MCF 10A (cell line): ENCODE measurements at regions of chr7 and their contacts with region 1.

Region 1: DNA sequence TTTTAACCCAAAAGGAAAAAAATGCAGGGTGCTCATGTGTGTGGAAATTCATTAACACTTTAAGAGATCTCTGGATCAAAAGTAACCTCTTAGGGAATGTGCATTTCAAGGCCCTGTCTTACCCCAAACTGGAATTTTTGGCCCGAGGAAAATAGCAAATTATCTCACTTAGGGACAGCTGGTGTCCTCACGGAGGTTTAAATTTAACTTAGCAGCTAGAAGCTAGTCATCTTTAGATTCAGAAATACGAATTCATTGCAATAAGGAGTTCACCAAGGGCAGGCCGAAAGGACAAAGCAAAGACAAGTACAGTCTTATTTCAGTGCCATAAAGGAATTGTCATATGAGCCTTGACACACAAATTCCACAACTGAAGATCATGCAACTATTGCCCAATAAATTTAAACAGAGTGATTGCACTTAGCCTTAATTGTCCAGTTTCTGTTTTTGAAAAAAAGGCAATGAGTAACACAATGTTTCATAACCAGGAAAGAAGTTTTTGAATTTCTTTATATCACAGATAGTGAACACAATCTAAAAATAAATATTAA is 22.4 kb upstream of the SEMA3C start:
- DNase-seq: peak; percentile 89
- H3K4me3 Mint-ChIP-seq: peak overlapping the region; percentile 26
- H3K27ac Mint-ChIP-seq: peak overlapping the region; percentile 76
- H3K4me1 Mint-ChIP-seq: peaks cover 20% of the 10 kb centered on the region
- H3K27me3 Mint-ChIP-seq: no peaks in the 10 kb centered on the region
- CTCF ChIP-seq: no peak

Region 2: GRCh38 chr7:80833289-80834268 is 107.7 kb before region 1 on chr7:
- CTCF ChIA-PET with region 1: no interaction called
- POLR2A ChIA-PET with region 1: no interaction called
- intact Hi-C with region 1: no loop called
- DNase-seq: no peak
- H3K4me3 Mint-ChIP-seq: no peak overlapping the region
- H3K27ac Mint-ChIP-seq: no peak overlapping the region
- H3K4me1 Mint-ChIP-seq: peaks cover 28% of the 10 kb centered on the region
- H3K27me3 Mint-ChIP-seq: no peaks in the 10 kb centered on the region
- CTCF ChIP-seq: no peak

Region 3: GRCh38 chr7:80883188-80884025 is 57.9 kb before region 1 on chr7:
- CTCF ChIA-PET with region 1: no interaction called
- POLR2A ChIA-PET with region 1: interaction called, 26 read pairs
- intact Hi-C with region 1: no loop called
- DNase-seq: peak; percentile 98
- H3K4me3 Mint-ChIP-seq: peak overlapping the region; percentile 3
- H3K27ac Mint-ChIP-seq: peak overlapping the region; percentile 10
- H3K4me1 Mint-ChIP-seq: peaks cover 35% of the 10 kb centered on the region
- H3K27me3 Mint-ChIP-seq: no peaks in the 10 kb centered on the region
- CTCF ChIP-seq: no peak

Region 4: DNA sequence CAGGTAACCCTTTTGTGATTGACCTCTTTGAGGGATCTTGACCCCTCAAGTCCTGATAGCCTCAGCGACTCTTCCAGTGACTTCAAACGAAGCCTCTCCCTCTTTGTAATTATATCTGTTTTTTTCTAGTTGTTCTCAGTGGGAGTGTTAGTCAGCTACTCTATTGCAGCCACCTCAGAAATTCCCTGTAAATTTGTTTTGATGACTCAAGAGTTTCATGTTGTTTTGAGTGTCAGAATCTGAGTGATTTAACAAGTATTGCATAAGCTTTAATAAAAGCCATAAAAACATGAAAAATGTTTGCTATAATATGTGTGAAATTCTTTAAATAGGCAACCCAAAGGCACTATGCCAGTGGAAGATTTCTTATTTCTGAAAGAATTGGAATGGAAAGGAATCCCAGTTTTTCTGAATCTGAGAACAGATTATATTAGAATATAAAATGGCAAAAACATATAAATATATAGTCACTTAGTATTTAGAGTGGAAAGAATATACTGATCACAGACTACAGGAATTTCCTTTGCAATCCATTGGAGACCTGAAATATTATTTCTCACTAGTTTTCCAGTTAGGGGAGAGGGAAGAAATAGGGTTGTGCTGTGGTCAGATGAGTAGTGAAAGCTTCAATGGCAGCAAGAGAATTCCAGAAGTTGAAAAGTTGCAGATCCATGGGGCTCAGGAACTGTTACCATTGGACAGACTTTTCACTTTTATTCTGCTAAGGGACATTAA is 72.0 kb after region 1 on chr7:
- CTCF ChIA-PET with region 1: interaction called, 3 read pairs
- POLR2A ChIA-PET with region 1: interaction called, 30 read pairs
- intact Hi-C with region 1: loop called (anchors 1 kb)
- DNase-seq: peak; percentile 88
- H3K4me3 Mint-ChIP-seq: peak overlapping the region; percentile 15
- H3K27ac Mint-ChIP-seq: peak overlapping the region; percentile 94
- H3K4me1 Mint-ChIP-seq: peaks cover 7% of the 10 kb centered on the region
- H3K27me3 Mint-ChIP-seq: no peaks in the 10 kb centered on the region
- CTCF ChIP-seq: no peak

Region 5: DNA sequence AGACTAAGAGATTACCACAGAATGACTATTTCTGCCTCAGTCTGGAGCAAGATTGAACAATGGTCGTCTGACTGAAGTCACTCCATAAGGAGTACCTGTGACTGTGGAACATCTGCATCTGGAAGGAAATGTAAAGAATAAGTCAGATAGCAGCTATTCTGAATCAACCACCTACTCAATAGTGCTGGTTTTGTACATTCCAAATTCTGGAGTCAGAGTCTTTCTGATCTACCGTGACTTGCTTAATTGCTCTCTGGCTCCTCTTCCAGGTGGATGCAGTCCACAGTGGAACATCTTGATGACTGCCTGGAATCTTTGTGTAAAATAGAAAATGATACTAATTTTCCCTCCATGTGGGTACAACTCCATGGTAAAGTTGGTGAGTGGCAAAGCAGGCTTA is 133.9 kb after region 1 on chr7:
- CTCF ChIA-PET with region 1: interaction called, 3 read pairs
- POLR2A ChIA-PET with region 1: interaction called, 20 read pairs
- intact Hi-C with region 1: loop called (anchors 1 kb)
- DNase-seq: peak; percentile 66
- H3K4me3 Mint-ChIP-seq: no peak overlapping the region
- H3K27ac Mint-ChIP-seq: peak overlapping the region; percentile 93
- H3K4me1 Mint-ChIP-seq: peaks cover 23% of the 10 kb centered on the region
- H3K27me3 Mint-ChIP-seq: no peaks in the 10 kb centered on the region
- CTCF ChIP-seq: no peak

Region 6: GRCh38 chr7:81161458-81162075 is 220.3 kb after region 1 on chr7:
- CTCF ChIA-PET with region 1: no interaction called
- POLR2A ChIA-PET with region 1: interaction called, 4 read pairs
- intact Hi-C with region 1: loop called (anchors 2 kb)
- DNase-seq: peak; percentile 96
- H3K4me3 Mint-ChIP-seq: no peak overlapping the region
- H3K27ac Mint-ChIP-seq: peak overlapping the region; percentile 73
- H3K4me1 Mint-ChIP-seq: peaks cover 22% of the 10 kb centered on the region
- H3K27me3 Mint-ChIP-seq: no peaks in the 10 kb centered on the region
- CTCF ChIP-seq: no peak

Region 7: DNA sequence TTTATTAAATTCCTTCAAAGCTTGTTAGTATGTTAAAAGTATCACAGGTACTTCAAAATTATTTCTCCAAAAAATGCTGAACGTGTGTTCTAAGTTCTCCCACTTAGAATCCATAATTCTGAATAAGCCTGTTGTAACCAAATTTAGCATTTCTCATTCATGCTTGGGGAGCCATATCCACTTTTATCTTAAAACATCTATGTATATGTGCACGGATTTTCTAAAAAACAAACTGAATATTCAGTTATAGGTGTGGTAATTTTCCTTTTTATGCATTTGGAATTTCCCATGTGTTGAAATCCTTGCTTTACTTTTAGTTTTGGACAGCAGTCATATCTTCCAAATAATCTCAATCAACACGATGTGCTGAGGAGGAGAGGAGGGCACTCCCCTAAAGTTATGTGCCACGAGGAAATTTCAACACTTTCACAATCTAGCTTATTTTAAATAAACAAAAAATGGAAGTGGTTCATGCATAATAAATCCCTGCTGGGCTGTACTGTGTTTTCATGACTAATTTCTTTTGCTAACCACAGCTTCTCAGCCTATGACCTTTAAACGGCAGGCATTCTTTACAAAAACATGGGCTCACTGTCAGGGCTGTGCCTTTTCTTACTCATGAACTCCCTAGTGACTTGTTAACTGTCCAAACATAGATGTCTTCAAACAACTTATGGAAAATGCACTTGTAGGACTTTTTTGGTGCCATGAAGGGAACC is 357.8 kb after region 1 on chr7:
- CTCF ChIA-PET with region 1: no interaction called
- POLR2A ChIA-PET with region 1: interaction called, 11 read pairs
- intact Hi-C with region 1: loop called (anchors 5 kb)
- DNase-seq: peak; percentile 94
- H3K4me3 Mint-ChIP-seq: peak overlapping the region; percentile 38
- H3K27ac Mint-ChIP-seq: peak overlapping the region; percentile 99
- H3K4me1 Mint-ChIP-seq: peaks cover 43% of the 10 kb centered on the region
- H3K27me3 Mint-ChIP-seq: no peaks in the 10 kb centered on the region
- CTCF ChIP-seq: no peak